ENCODE measurements at regions of chr18 and their contacts with region 1.

Region 1: GRCh38 chr18:80103231-80103630 is 5.8 kb upstream of the ADNP2 start:
- DNase-seq: peak; percentile 69
- ATAC-seq: peak; percentile 78
- H3K4me3 ChIP-seq: no peak overlapping the region
- H3K27ac ChIP-seq: no peak overlapping the region
- H3K4me1 ChIP-seq: peaks cover 4% of the 10 kb centered on the region
- H3K27me3 ChIP-seq: no peaks in the 10 kb centered on the region
- CTCF ChIP-seq: no peak
- POLR2A ChIP-seq: no peak
- RAD21 ChIP-seq: no peak

Region 2: DNA sequence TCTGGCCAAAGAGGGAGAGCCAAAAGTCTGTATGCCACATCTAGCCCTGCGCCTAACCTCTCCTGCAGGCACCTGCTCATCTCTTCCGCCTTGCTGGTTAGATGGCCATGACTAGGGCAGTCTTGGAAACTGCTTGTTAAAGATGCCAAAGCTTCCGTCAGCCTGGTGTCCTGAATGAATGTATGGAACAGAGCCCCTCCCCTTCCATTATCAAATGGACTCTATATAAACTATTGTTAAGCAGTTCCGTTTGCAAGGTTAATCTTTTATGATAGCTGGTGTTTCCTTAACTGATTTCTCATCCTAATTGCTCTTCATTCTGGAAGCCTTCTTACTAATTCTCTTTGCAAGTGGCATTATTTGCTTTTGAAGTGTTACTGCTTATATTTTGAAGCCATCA is 946.9 kb before region 1 on chr18:
- CTCF ChIA-PET with region 1: no interaction called
- POLR2A ChIA-PET with region 1: interaction called, 13 read pairs
- dilution Hi-C with region 1: no loop called
- in situ Hi-C with region 1: no loop called
- intact Hi-C with region 1: no loop called
- DNase-seq: no peak
- ATAC-seq: peak; percentile 24; the same call in 1 of the 2 replicates
- H3K4me3 ChIP-seq: no peak overlapping the region
- H3K27ac ChIP-seq: peak overlapping the region; percentile 15; the same call in 1 of the 2 replicates
- H3K4me1 ChIP-seq: peaks cover 3% of the 10 kb centered on the region; the same call in 1 of the 2 replicates
- H3K27me3 ChIP-seq: no peaks in the 10 kb centered on the region
- CTCF ChIP-seq: no peak
- POLR2A ChIP-seq: no peak
- RAD21 ChIP-seq: no peak

Region 3: GRCh38 chr18:79698668-79699335 is 404.4 kb before region 1 on chr18:
- CTCF ChIA-PET with region 1: no interaction called
- POLR2A ChIA-PET with region 1: no interaction called
- dilution Hi-C with region 1: no loop called
- in situ Hi-C with region 1: no loop called
- intact Hi-C with region 1: no loop called
- DNase-seq: peak; percentile 84
- ATAC-seq: peak; percentile 71
- H3K4me3 ChIP-seq: no peak overlapping the region
- H3K27ac ChIP-seq: no peak overlapping the region
- H3K4me1 ChIP-seq: peaks cover 14% of the 10 kb centered on the region
- H3K27me3 ChIP-seq: no peaks in the 10 kb centered on the region
- CTCF ChIP-seq: no peak
- POLR2A ChIP-seq: no peak
- RAD21 ChIP-seq: no peak

Region 4: DNA sequence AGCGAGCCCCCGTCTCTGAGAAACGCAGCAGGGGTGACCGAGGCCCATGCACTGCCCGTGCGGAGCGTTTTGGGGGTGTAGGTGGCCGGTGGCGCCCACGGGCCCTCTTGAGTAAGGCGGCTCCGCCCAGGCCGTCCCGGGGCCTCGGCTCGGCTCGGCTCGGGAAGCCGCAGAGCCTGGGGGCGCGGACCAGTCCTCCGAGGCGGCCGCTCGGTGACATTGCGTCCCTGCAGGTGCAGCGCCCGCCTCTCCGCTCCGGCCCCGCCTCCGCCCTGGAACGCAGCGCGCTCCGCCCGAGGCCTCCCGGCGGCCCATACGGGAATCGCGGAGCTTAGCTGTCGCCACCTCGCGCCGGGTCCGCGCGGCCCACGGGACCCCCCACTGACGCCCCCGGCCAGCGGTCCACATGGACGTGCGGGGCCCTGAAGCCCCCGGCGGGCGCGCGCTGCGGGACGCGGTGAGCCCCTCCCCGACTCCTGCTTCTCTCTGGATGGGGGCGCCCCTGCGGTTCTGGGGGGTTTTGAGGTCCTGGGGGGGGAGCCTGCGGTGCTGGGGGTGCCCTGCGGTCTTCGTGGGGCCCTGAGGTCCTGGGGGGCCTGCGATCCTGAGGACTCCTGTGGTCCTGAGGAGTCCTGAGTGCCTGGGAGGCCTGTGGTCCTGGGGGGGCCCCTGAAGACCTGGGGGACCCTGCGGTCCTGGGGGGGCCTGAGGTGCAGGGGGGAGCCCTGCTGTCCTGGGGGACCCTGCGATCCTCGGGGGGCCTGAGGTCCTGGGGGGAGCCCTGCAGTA is 138.7 kb before region 1 on chr18 and contains the start of gene HSBP1L1:
- CTCF ChIA-PET with region 1: no interaction called
- POLR2A ChIA-PET with region 1: no interaction called
- dilution Hi-C with region 1: no loop called
- in situ Hi-C with region 1: no loop called
- intact Hi-C with region 1: no loop called
- DNase-seq: no peak
- ATAC-seq: peak; percentile 60
- H3K4me3 ChIP-seq: peak within 1 kb of the TSS; percentile 66
- H3K27ac ChIP-seq: peak within 1 kb of the TSS; percentile 84
- H3K4me1 ChIP-seq: peaks cover 9% of the 10 kb centered on the region
- H3K27me3 ChIP-seq: no peaks in the 10 kb centered on the region
- CTCF ChIP-seq: peak; percentile 32; the same call in 1 of the 2 replicates
- POLR2A ChIP-seq: no peak; the same call in 1 of the 2 replicates
- RAD21 ChIP-seq: 0 out of 2 replicates have a peak, but pooled peaks have one; percentile 10
- total RNA-seq, gene HSBP1L1: 7.8 and 8.6 TPM in 2 replicates

Measured in IMR-90 (cell line).